ENCODE measurements at regions of chr1 and their contacts with region 1.

Region 1: DNA sequence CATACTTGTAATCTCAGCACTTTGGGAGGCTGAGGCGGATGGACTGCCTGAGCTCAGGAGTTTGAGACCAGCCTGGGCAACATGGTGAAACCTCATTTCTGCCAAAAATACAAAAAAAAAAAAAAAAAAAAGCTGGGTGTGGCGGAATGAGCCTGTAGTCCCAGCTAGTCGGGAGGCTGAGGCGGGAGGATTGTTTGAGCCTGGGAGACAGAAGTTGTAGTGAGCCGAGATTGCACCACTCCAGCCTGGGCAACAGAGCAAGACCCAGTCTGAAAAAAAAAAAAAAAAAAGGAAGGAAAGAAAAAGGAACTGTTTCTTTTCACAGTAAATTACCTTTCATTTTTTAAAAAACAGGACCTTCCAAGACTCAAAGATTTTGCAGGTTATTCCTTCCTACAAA is 29.5 kb downstream of the LIN9 start:
- DNase-seq: no peak
- H3K4me3 ChIP-seq: no peak overlapping the region
- H3K27ac ChIP-seq: no peak overlapping the region
- H3K4me1 ChIP-seq: no peaks in the 10 kb centered on the region
- H3K27me3 ChIP-seq: no peaks in the 10 kb centered on the region
- CTCF ChIP-seq: no peak

Region 2: DNA sequence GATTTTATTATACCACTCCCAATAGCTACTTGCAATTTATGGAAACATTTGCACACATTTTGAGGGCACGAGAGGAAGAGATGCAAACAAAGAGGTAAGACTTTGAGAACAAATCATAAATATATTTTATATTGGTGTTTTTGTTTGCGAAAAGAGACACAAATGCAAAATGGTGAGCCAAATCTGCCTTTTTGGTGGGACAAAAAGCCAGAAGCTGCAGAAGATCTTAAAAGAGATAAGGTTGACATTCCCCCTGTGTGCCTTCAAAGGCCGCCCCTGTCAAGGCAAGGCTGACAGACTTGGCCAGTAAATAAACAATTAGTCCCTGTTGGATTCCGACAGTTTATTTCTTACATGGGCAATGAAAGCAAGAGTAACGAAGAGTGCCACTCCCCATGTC is 974.5 kb before region 1 on chr1:
- CTCF ChIA-PET with region 1: interaction called, 15 read pairs
- POLR2A ChIA-PET with region 1: no interaction called
- intact Hi-C with region 1: no loop called
- DNase-seq: no peak
- H3K4me3 ChIP-seq: no peak overlapping the region
- H3K27ac ChIP-seq: no peak overlapping the region
- H3K4me1 ChIP-seq: no peaks in the 10 kb centered on the region
- H3K27me3 ChIP-seq: no peaks in the 10 kb centered on the region
- CTCF ChIP-seq: no peak

Region 3: DNA sequence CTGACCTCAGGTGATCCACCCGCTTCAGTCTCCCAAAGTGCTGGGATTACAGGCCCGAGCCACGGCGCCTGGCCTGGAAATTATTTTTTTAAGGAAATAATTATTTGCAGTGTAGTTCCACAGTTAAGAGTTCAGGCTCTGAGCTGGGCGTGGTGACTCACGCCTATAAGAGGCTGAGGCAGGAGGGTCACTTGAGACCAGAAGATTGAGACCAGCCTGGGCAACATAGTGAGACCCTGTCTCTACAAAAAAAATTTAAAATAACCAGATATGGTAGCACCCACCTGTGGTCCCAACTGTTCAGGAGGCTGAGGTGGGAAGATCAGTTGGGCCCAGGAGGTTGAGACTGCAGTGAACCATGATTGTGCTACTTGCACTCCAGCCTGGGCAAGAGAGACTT is 203.1 kb before region 1 on chr1:
- CTCF ChIA-PET with region 1: interaction called, 5 read pairs
- POLR2A ChIA-PET with region 1: interaction called, 11 read pairs
- intact Hi-C with region 1: no loop called
- DNase-seq: no peak
- H3K4me3 ChIP-seq: no peak overlapping the region
- H3K27ac ChIP-seq: no peak overlapping the region
- H3K4me1 ChIP-seq: no peaks in the 10 kb centered on the region
- H3K27me3 ChIP-seq: no peaks in the 10 kb centered on the region
- CTCF ChIP-seq: no peak

Region 4: GRCh38 chr1:226166341-226166740 is 113.2 kb before region 1 on chr1:
- CTCF ChIA-PET with region 1: no interaction called
- POLR2A ChIA-PET with region 1: no interaction called
- intact Hi-C with region 1: no loop called
- DNase-seq: no peak
- H3K4me3 ChIP-seq: no peak overlapping the region
- H3K27ac ChIP-seq: no peak overlapping the region
- H3K4me1 ChIP-seq: 0 out of 2 replicates have a peak, but pooled peaks cover 3% of the 10 kb centered on the region
- H3K27me3 ChIP-seq: no peaks in the 10 kb centered on the region
- CTCF ChIP-seq: no peak

Region 5: DNA sequence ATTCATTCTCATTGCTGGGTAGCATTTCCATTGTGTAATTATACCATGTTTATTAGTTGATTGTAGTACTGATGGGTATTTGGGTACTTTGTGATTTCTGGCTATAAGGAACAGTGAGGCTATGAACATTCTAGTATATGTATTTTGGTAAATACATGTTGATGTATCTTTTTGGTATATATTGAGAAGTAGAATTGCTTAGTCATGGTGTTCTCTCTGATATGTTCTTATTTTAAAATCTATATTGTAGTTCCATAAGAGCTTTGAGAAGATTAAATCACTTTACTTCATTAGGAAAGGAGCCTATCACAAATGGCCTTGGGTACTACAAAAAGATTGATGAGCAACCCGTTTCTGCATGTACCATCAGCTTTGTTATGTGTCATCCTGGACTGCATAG is 42.7 kb before region 1 on chr1:
- CTCF ChIA-PET with region 1: no interaction called
- POLR2A ChIA-PET with region 1: no interaction called
- intact Hi-C with region 1: no loop called
- DNase-seq: no peak
- H3K4me3 ChIP-seq: no peak overlapping the region
- H3K27ac ChIP-seq: no peak overlapping the region
- H3K4me1 ChIP-seq: no peaks in the 10 kb centered on the region
- H3K27me3 ChIP-seq: no peaks in the 10 kb centered on the region
- CTCF ChIP-seq: no peak